ENCODE measurements at regions of chr4 and their contacts with region 1.

Region 1: DNA sequence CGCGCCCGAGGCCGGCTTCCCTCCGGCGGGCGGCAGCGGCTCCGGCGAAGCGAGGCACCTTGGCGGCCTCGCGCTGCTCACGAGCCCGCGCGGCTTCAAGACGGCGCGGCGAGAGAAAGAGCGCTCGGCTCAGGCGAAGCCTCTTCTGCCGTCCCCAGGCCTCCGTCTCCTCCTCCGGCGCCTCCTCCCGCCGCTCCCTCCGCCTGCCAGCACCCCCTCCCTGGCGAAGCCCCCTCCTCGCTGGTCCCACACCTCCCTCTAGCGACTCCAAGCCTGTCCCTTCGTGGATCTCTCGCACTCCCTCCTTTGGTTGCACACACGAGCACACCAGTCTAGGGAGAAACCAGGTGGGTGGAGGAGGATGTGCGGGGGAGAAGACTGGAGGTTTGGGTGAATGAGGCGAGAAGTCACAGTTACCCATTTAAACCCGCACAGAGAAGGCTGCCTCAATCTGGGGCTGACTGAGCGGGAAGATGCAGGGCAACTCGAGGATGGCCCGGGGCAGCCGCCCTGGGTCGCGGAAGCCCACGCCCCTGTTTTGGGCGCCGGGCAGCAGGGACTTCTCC is at the start of gene CAMK2D:
- DNase-seq: peak; percentile 93
- H3K4me3 Mint-ChIP-seq: peak within 1 kb of the TSS; percentile 89
- H3K27ac Mint-ChIP-seq: peak within 1 kb of the TSS; percentile 93
- H3K4me1 Mint-ChIP-seq: peaks cover 38% of the 10 kb centered on the region
- H3K27me3 Mint-ChIP-seq: peaks cover 2% of the 10 kb centered on the region
- total RNA-seq, gene CAMK2D: 82.5 to 82.9 TPM

Region 2: GRCh38 chr4:112515304-112516067 is 1246.2 kb before region 1 on chr4:
- CTCF ChIA-PET with region 1: no interaction called
- POLR2A ChIA-PET with region 1: no interaction called
- intact Hi-C with region 1: loop called (anchors 10 kb)
- DNase-seq: peak; percentile 67
- H3K4me3 Mint-ChIP-seq: peak overlapping the region; percentile 94
- H3K27ac Mint-ChIP-seq: no peak overlapping the region
- H3K4me1 Mint-ChIP-seq: peaks cover 42% of the 10 kb centered on the region
- H3K27me3 Mint-ChIP-seq: peaks cover 85% of the 10 kb centered on the region

Region 3: DNA sequence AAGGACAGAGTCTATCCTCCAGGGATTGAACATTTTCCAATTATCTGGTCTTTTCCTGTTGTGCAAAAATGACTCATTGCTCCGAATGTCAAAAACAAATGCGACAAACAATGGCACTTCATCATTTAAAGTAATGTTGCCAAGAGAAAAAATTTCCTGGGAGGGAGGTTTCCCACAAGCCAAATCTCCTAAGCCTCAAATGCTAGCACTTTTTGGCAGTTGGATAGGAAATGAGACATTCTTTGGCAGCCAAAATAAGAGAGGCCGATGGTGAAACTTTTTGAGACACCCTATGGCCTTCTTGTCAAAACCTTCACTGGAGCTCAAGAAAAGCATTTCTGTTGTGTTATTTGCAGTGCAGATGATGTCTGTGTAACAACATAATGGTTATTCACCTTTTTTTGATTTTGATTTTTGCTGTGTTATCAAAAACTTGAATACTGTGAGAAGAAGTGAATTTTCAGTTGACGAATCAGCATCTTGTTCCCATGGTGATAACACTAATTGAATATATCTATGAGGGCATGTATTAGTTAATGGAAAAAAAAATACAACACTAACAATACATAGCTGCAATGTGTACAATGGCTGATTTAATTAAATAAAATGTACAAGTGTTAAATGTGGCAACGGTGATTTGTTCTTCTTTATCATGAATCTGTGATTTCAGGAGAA is 378.5 kb before region 1 on chr4:
- CTCF ChIA-PET with region 1: no interaction called
- POLR2A ChIA-PET with region 1: no interaction called
- intact Hi-C with region 1: loop called (anchors 1 kb)
- DNase-seq: no peak
- H3K4me3 Mint-ChIP-seq: no peak overlapping the region
- H3K27ac Mint-ChIP-seq: no peak overlapping the region
- H3K4me1 Mint-ChIP-seq: peaks cover 15% of the 10 kb centered on the region
- H3K27me3 Mint-ChIP-seq: peaks cover 9% of the 10 kb centered on the region

Region 4: DNA sequence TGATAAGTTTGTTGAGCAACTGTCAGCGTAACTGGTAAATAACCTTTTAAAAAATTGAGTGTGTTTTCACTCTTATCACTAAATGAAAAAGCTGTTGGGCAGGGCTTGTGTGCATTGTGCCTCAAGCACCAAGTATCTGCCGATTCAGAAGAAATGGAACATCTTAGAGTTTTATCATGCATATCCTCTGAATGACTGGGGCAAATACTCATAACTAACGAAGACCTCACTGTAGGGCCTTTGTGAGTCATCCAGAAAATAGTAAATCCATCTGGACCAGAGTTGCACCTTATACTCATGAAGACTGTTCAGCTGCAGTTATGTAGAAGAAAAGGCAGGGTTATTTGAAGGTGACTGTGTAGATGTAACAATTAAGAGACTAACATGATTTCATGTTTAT is 222.3 kb before region 1 on chr4:
- CTCF ChIA-PET with region 1: interaction called, 6 read pairs
- POLR2A ChIA-PET with region 1: no interaction called
- intact Hi-C with region 1: loop called (anchors 1 kb)
- DNase-seq: peak; percentile 46
- H3K4me3 Mint-ChIP-seq: no peak overlapping the region
- H3K27ac Mint-ChIP-seq: peak overlapping the region; percentile 65
- H3K4me1 Mint-ChIP-seq: peaks cover 38% of the 10 kb centered on the region
- H3K27me3 Mint-ChIP-seq: no peaks in the 10 kb centered on the region

Region 5: DNA sequence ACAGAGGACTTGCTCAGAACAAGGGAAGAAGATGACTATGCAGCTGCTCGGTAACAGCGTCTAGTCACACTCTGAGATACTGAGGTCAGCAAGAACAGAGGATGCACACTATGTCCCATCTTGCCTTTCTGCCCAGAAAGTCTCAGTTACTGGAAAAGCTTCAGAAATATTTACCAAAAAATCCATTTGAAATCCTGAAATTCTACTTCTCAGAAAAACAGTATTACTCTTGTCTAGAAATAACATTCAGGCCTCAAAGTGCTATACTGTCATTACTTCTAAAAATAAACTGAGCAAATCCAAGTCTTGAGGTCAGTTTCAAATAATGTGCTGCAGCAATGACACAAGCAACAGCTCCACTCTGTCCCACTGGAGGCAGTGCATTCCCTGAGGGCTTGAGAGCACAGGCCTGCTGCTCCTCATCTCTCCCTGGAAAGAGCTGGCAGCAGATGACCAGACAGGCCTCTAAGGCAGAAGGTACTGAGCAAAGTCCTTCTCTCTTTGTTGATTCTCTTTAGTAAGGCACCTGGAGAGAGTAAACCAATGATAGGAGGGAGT is 77.1 kb before region 1 on chr4:
- CTCF ChIA-PET with region 1: no interaction called
- POLR2A ChIA-PET with region 1: interaction called, 12 read pairs
- intact Hi-C with region 1: loop called (anchors 1 kb)
- DNase-seq: peak; percentile 72
- H3K4me3 Mint-ChIP-seq: peak overlapping the region; percentile 42
- H3K27ac Mint-ChIP-seq: peak overlapping the region; percentile 93
- H3K4me1 Mint-ChIP-seq: peaks cover 71% of the 10 kb centered on the region
- H3K27me3 Mint-ChIP-seq: no peaks in the 10 kb centered on the region

Region 6: GRCh38 chr4:113869743-113870375 is 108.2 kb after region 1 on chr4:
- CTCF ChIA-PET with region 1: no interaction called
- POLR2A ChIA-PET with region 1: no interaction called
- intact Hi-C with region 1: loop called (anchors 1 kb)
- DNase-seq: peak; percentile 66
- H3K4me3 Mint-ChIP-seq: no peak overlapping the region
- H3K27ac Mint-ChIP-seq: peak overlapping the region; percentile 76
- H3K4me1 Mint-ChIP-seq: peaks cover 11% of the 10 kb centered on the region
- H3K27me3 Mint-ChIP-seq: no peaks in the 10 kb centered on the region

Region 7: GRCh38 chr4:113908829-113909228 is 147.1 kb after region 1 on chr4:
- CTCF ChIA-PET with region 1: no interaction called
- POLR2A ChIA-PET with region 1: no interaction called
- intact Hi-C with region 1: no loop called
- DNase-seq: no peak
- H3K4me3 Mint-ChIP-seq: no peak overlapping the region
- H3K27ac Mint-ChIP-seq: no peak overlapping the region
- H3K4me1 Mint-ChIP-seq: peaks cover 17% of the 10 kb centered on the region
- H3K27me3 Mint-ChIP-seq: no peaks in the 10 kb centered on the region